B cell (primary cell): ENCODE measurements at regions of chr3 and their contacts with region 1.

Region 1: GRCh38 chr3:128804017-128804810 is 75.2 kb upstream of the ACAD9 start:
- DNase-seq: peak; percentile 84
- ATAC-seq: peak; percentile 95
- H3K4me3 ChIP-seq: peak overlapping the region; percentile 13 to 55 (median 28)
- H3K4me3 Mint-ChIP-seq: peak overlapping the region; percentile 69
- H3K27ac ChIP-seq: peak overlapping the region; percentile 58 to 89
- H3K27ac Mint-ChIP-seq: peak overlapping the region; percentile 84
- H3K4me1 ChIP-seq: peaks cover 19 to 21% of the 10 kb centered on the region in 2 donors
- H3K4me1 Mint-ChIP-seq: peaks cover 56% of the 10 kb centered on the region
- H3K27me3 ChIP-seq: no peaks in the 10 kb centered on the region
- H3K27me3 Mint-ChIP-seq: no peaks in the 10 kb centered on the region
- CTCF ChIP-seq: no peak

Region 2: DNA sequence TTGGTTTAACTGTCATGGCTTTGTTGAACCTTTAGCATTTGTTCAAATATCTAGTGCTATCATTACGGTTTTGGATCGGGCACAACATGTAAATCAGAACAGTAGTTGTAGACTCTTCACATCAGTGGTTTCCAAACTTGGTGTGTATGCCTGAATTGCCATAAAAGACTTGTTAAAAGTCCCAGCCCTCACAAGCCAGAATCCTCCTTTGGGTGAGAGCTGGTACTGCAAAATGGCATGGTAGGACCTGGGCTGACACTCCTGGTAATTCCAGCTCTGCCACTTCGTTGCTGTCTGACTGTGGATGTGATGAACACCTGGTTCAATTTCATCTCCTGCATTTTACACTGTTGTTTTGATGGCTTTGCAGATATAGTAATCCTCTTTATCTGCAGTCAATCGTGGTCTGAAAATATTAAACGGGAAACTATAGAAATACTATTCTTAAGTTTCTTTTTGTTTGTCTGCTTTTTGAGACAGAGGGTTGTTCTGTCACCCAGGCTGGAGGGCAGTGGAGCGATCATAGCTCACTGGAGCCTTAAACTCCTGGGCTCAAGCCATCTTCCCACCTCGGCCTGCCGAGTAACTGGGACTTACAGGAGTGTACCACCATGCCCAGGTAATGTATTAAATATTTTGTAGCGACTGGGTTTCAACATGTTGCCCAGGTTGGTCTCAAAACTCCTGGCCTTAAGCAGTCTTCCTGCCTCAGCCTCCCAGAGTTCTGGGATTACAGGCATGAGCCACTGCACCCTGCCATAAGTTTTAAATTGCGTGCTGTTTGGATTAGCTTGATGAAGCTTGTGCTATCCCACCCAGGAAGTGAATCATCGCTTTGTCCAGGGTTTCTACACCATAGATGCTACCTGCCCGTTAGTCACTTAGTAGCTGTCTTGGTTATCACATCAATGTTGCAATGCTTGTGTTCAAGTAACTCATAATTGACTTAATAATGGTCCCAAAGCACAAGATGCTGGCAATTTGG is 16.7 kb before region 1 on chr3:
- CTCF ChIA-PET with region 1: interaction called, 9 read pairs
- POLR2A ChIA-PET with region 1: no interaction called
- intact Hi-C with region 1: loop called (anchors 2 kb)
- DNase-seq: peak; percentile 68
- ATAC-seq: peak; percentile 80
- H3K4me3 ChIP-seq: no peak overlapping the region
- H3K4me3 Mint-ChIP-seq: peak overlapping the region; percentile 21
- H3K27ac ChIP-seq: peak overlapping the region; percentile 4 to 60
- H3K27ac Mint-ChIP-seq: peak overlapping the region; percentile 85
- H3K4me1 ChIP-seq: peaks cover 60% of the 10 kb centered on the region in 2 donors
- H3K4me1 Mint-ChIP-seq: peaks cover 88% of the 10 kb centered on the region
- H3K27me3 ChIP-seq: no peaks in the 10 kb centered on the region
- H3K27me3 Mint-ChIP-seq: no peaks in the 10 kb centered on the region
- CTCF ChIP-seq: peak; percentile 74

Region 3: GRCh38 chr3:129586746-129587430 is 782.7 kb after region 1 on chr3:
- CTCF ChIA-PET with region 1: no interaction called
- POLR2A ChIA-PET with region 1: interaction called, 17 read pairs
- intact Hi-C with region 1: no loop called
- DNase-seq: no peak
- ATAC-seq: no peak
- H3K4me3 ChIP-seq: no peak overlapping the region
- H3K4me3 Mint-ChIP-seq: no peak overlapping the region
- H3K27ac ChIP-seq: no peak overlapping the region
- H3K27ac Mint-ChIP-seq: peak overlapping the region; percentile 6
- H3K4me1 ChIP-seq: peaks cover 0 to 6% of the 10 kb centered on the region in 2 donors
- H3K4me1 Mint-ChIP-seq: peaks cover 9% of the 10 kb centered on the region
- H3K27me3 ChIP-seq: peaks cover 0 to 6% (median 2%) of the 10 kb centered on the region in 4 experiments
- H3K27me3 Mint-ChIP-seq: peaks cover 8% of the 10 kb centered on the region
- CTCF ChIP-seq: no peak